Thyroid gland (tissue), 4 donors: ENCODE measurements at regions of chr3 and their contacts with region 1.

Region 1: DNA sequence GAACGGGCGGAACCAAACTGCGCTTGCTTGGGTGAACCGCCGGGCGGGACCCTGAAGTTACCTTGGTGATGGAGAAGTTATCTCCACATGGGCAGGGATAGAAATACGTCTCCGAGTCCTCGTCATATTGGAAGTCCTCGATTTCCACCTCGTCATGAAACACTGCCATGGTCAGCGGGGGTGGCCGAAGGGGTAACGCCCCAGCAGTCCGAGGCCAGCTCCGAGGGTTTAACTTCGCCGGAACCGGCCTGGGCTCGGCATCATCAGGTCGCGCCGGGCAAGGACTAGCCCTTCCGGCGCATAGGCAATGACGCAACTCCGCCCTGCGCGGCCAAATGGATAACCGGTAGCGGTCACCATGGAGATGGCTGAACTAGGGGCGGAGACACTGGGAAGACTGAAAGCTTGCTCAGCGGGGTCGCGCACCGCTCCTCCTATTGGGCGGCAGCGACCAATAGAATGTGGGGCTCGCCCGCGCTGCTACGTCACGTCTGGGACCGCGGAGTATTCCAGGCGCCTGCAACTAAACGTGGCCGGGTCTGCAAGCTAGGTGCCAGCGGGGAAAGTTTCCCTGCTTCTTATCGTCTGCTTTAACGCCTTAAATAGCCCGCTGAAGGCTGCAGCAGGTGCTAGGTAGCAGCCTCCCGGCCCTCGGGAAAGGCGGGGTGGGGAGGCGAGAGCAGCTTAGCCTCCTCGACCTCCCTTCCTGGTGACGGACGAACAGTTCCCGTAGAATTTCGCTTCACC is at the starts of genes DPH3 and OXNAD1:
- DNase-seq: peak; percentile 100
- H3K4me3 ChIP-seq: peak within 1 kb of the TSS; percentile 77 to 86 (median 78)
- H3K27ac ChIP-seq: peak within 1 kb of the TSS; percentile 67 to 91 (median 87)
- H3K4me1 ChIP-seq: peaks cover 16 to 21% of the 10 kb centered on the region in 2 donors
- H3K27me3 ChIP-seq: no peaks in the 10 kb centered on the region
- CTCF ChIP-seq: peak in 3 of 6 experiments; percentile 25 to 38 (median 34)
- POLR2A ChIP-seq: peak in 1 of 2 donors; percentile 85
- total RNA-seq, gene DPH3: 18.4 to 27.1 (median 19.6) TPM
- total RNA-seq, gene OXNAD1: 22.3 to 34.0 (median 27.4) TPM

Region 2: DNA sequence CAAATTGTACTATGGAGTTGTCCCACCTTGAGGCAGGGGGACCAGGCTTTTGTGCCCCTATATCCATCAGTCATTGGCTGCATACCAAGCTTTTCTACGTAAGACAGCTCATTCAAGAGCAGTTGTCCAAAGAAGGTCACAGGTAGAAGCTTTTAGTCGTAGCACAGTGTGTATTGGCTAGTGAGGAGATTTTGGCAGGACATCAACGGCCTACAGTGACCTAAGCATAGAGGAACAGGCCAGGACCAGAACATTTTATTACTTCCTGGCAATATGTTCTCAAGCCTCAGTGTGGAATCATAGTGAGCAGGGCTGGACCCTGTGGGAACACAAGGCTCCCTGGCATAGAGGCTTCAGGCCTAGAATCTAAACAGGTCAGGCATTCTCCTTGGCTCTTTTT is 361.7 kb before region 1 on chr3:
- intact Hi-C with region 1: no loop called
- DNase-seq: peak; percentile 88 to 90
- H3K4me3 ChIP-seq: no peak overlapping the region
- H3K27ac ChIP-seq: peak overlapping the region; percentile 82 to 96 (median 94)
- H3K4me1 ChIP-seq: peaks cover 15 to 28% of the 10 kb centered on the region in 2 donors
- H3K27me3 ChIP-seq: no peaks in the 10 kb centered on the region
- CTCF ChIP-seq: no peak
- POLR2A ChIP-seq: peak in 1 of 2 donors; percentile 62

Region 3: DNA sequence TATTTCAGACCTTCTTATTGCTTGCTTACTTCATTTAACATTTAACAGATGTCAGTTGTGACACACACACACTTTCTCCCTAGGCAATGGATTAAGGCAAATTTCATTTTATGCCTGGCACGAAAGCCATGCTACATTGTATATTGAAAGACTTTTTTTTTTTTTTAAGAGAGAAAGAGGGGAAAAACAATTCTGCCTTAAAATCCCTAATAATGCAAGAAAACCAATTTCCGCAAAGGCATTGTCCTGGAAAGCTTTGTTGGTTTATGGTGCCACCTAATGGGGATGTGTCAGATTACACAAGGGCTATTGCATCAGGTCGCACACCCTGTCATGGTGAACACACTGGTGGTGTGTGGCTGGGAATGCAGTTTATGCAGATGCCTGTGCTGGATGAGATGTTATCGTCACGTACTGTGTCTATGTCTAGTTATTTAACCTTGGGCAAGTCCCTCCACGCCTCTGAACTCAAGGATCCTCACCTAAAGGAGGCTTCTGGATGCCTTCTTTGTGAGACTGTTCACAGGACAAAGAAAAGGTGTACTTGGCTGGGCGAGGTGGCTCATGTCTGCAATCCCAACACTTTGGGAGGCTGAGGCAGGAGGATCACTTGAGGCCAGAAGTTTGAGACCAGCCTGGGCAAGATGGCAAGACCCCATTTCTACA is 285.9 kb after region 1 on chr3:
- intact Hi-C with region 1: loop called (anchors 5 kb)
- DNase-seq: peak; percentile 61 to 69
- H3K4me3 ChIP-seq: no peak overlapping the region
- H3K27ac ChIP-seq: no peak overlapping the region
- H3K4me1 ChIP-seq: no peaks in the 10 kb centered on the region
- H3K27me3 ChIP-seq: no peaks in the 10 kb centered on the region
- CTCF ChIP-seq: peak; percentile 65 to 96 (median 90)
- POLR2A ChIP-seq: no peak